ENCODE measurements at regions of chr10 and their contacts with region 1.

Region 1: GRCh38 chr10:7410862-7411670 is at the start of gene SFMBT2:
- DNase-seq: peak; percentile 75
- ATAC-seq: peak; percentile 59
- H3K4me3 Mint-ChIP-seq: peak within 1 kb of the TSS; percentile 98
- H3K27ac Mint-ChIP-seq: peak within 1 kb of the TSS; percentile 95
- H3K4me1 Mint-ChIP-seq: peaks cover 26% of the 10 kb centered on the region
- H3K27me3 Mint-ChIP-seq: peaks cover 23% of the 10 kb centered on the region
- total RNA-seq, gene SFMBT2: 50.6 to 52.4 TPM

Region 2: GRCh38 chr10:6929148-6929830 is 481.8 kb before region 1 on chr10:
- POLR2A ChIA-PET with region 1: interaction called, 23 read pairs
- DNase-seq: no peak
- ATAC-seq: no peak
- H3K4me3 Mint-ChIP-seq: peak overlapping the region; percentile 25
- H3K27ac Mint-ChIP-seq: peak overlapping the region; percentile 95
- H3K4me1 Mint-ChIP-seq: peaks cover 48% of the 10 kb centered on the region
- H3K27me3 Mint-ChIP-seq: peaks cover 8% of the 10 kb centered on the region

Region 3: DNA sequence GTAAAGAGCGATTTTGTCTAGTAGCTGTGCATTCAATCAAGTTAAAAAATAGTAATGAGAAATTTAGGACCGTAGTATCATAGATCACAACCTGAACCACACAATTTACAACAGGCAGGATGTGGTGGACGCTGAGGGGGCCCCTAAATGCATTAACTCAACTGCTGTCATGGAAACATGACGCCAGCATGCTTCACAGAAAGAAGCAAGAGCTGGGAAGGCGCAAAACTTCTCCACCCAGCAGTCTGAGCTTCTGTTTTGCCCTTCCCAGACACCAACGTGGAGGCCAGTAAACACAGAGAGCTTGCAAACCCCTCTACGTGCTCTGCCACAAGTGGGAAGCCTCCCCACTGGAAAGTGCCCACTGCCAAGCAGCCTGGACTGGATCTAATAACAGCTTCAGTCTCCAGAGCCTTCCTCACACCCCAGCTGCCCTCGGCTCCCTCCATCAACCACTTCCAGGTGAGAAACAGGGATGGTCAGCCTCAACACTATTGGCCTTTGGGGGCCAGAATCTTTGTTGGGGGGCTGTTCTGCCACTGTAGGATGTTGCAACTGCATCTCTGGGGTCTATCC is 152.0 kb before region 1 on chr10:
- POLR2A ChIA-PET with region 1: interaction called, 10 read pairs
- DNase-seq: peak; percentile 70
- ATAC-seq: peak; percentile 77
- H3K4me3 Mint-ChIP-seq: peak overlapping the region; percentile 62
- H3K27ac Mint-ChIP-seq: peak overlapping the region; percentile 81
- H3K4me1 Mint-ChIP-seq: peaks cover 51% of the 10 kb centered on the region
- H3K27me3 Mint-ChIP-seq: no peaks in the 10 kb centered on the region

Region 4: GRCh38 chr10:7424315-7424714 is 13.2 kb after region 1 on chr10:
- POLR2A ChIA-PET with region 1: interaction called, 13 read pairs
- DNase-seq: no peak
- ATAC-seq: peak; percentile 84
- H3K4me3 Mint-ChIP-seq: no peak overlapping the region
- H3K27ac Mint-ChIP-seq: no peak overlapping the region
- H3K4me1 Mint-ChIP-seq: peaks cover 19% of the 10 kb centered on the region
- H3K27me3 Mint-ChIP-seq: peaks cover 7% of the 10 kb centered on the region

Region 5: DNA sequence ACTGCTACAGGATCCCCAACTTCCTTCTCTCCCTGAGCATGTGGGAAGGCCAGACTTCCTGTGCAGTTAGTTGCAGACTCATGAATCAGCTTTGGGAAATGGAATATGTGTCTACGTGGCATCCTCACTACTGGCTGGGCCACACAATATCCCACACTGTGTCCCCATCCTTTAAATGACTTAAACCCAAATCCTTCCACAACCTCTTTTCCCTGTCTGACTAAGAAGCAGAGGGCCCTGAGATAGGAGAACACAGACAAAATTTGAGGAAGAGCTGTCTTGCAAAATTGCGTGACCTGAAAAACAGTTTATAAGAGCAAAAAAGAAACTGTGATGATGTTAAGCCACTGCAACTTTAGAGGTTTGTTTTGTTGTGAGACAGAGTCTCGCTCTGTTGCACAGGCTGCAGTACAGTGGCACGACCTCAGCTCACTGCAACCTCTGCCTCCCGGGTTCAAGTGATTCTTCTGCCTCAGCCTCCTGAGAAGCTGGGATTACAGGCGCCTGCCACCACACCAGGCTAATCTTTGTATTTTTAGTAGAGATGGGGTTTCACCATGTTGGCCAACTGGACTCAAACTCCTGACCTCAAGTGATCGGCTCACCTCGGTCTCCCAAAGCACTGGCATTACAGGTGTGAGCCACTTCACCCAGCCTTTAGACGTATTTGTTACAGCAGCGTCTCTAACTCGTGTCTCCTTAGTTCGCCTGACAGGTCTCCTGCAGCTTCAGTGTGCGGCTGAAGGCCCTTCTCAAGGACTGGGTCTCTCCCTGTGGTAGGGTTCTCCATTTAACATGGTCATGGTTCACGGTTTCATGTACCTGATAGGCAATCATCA is 46.6 kb after region 1 on chr10:
- POLR2A ChIA-PET with region 1: no interaction called
- DNase-seq: no peak
- ATAC-seq: no peak
- H3K4me3 Mint-ChIP-seq: no peak overlapping the region
- H3K27ac Mint-ChIP-seq: no peak overlapping the region
- H3K4me1 Mint-ChIP-seq: peaks cover 4% of the 10 kb centered on the region
- H3K27me3 Mint-ChIP-seq: no peaks in the 10 kb centered on the region

Region 6: GRCh38 chr10:7507887-7508726 is 97.0 kb after region 1 on chr10:
- POLR2A ChIA-PET with region 1: interaction called, 15 read pairs
- DNase-seq: peak; percentile 88
- ATAC-seq: peak; percentile 80
- H3K4me3 Mint-ChIP-seq: peak overlapping the region; percentile 58
- H3K27ac Mint-ChIP-seq: peak overlapping the region; percentile 89
- H3K4me1 Mint-ChIP-seq: peaks cover 55% of the 10 kb centered on the region
- H3K27me3 Mint-ChIP-seq: no peaks in the 10 kb centered on the region

Measured in activated naive CD8-positive, alpha-beta T cell treated with anti-CD3 and anti-CD28 coated beads, Interleukin-2, amount 10 ng/mL, durations not matched to agents 7 days and 5 days (primary cell).